Psoas muscle (tissue), 8 donors: ENCODE measurements at regions of chr21 and their contacts with region 1.

Region 1: GRCh38 chr21:36773117-36773516 is 74.2 kb downstream of the SIM2 start:
- DNase-seq: peak; percentile 88 to 95
- ATAC-seq: peak; percentile 99
- H3K4me3 ChIP-seq: no peak overlapping the region
- H3K27ac ChIP-seq: peak overlapping the region; percentile 47
- H3K4me1 ChIP-seq: peaks cover 15% of the 10 kb centered on the region
- H3K27me3 ChIP-seq: no peaks in the 10 kb centered on the region
- CTCF ChIP-seq: no peak

Region 2: DNA sequence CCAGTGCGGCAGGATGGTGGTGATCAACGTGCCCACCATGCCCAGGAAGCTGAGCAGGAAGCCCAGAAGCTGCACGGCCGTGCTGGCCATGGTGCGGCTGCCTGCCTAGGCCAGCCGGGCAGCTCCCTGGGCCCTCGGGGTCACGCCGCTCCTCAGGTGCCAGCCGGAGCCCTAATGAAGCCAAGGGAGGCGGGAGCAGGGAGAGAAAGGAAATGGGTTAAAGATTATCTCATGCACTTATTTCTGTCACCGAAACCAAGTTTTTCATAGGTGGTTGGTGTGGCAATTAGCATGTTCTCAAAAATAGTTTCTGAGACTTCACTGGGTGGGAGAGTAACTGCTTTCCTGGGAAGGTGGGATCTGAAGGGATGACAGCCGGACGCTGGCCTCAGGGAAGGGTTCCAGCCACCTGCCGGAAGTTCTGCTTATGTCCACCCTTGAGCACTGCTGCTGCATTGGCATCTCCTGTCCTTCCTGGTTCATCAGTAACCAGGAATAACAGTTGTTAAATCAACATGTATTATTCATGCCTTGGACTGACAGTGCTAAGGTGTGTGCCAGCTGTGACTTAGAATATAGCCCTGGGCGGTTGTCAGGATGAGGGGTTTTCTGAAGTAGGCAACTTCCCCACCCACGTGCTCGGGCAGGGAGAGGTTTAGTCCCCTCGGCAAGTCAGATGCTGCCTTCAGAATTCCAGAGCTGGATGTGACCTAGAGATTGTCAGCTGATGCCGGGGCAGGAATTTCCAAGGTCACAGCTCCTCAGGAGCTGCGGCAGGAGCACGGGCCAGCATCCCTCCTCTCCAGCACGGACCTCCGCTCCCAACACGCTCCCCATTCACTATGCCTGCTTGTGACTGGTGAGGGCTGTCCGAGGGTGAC is 311.3 kb before region 1 on chr21:
- intact Hi-C with region 1: no loop called
- DNase-seq: no peak
- ATAC-seq: no peak
- H3K4me3 ChIP-seq: no peak overlapping the region
- H3K27ac ChIP-seq: no peak overlapping the region
- H3K4me1 ChIP-seq: peaks cover 14% of the 10 kb centered on the region
- H3K27me3 ChIP-seq: no peaks in the 10 kb centered on the region
- CTCF ChIP-seq: no peak

Region 3: DNA sequence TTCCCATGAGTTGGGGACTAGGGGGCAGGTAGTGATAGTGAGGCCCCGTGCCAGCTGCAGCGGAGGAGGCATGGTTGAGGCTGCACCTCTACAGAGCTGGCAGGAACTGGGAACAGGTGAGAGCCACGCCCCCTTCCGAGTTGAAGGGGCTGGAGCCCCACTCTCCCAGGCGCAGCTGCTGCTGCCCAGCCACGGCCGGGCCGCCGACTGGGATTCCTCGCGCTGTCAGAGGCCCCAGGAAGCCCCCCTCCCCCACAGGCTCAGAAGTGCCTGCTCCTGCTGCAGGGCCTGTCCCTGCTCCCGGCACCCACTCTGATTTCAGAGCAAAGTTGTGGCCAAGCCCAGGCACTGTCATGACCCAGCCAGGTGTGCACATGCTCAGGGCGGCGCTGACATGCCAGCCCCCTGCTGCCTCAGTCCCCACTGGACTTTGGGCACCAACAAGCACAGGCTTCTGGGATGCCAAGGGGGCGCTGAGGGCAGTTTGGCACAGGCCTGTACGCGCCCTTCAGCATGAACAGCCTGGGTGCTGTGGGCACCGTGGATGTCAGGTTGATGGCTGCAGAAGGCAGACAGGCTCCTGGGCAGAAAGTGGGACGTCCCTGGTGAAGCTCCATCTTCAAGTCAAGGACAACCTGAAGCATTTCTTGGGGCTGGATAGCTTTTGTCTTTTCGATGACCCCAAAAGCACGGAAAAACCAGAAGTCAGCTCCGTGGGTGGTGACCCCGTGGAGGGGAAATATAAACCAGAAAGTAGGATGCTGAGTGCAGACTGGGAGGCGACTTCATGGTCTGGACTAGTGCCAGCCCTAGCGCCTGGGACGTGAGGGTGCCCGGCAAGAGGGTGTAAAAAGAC is 47.3 kb after region 1 on chr21:
- intact Hi-C with region 1: no loop called
- DNase-seq: no peak
- ATAC-seq: peak in 1 of 4 donors; percentile 22
- H3K4me3 ChIP-seq: no peak overlapping the region
- H3K27ac ChIP-seq: no peak overlapping the region
- H3K4me1 ChIP-seq: no peaks in the 10 kb centered on the region
- H3K27me3 ChIP-seq: no peaks in the 10 kb centered on the region
- CTCF ChIP-seq: no peak

Region 4: GRCh38 chr21:36835383-36835795 is 62.3 kb after region 1 on chr21:
- intact Hi-C with region 1: loop called in 1 of 2 experiments (anchors 10 kb)
- DNase-seq: peak; percentile 63 to 93
- ATAC-seq: peak; percentile 99 to 100 (median 99)
- H3K4me3 ChIP-seq: peak overlapping the region; percentile 3
- H3K27ac ChIP-seq: peak overlapping the region; percentile 77
- H3K4me1 ChIP-seq: peaks cover 31% of the 10 kb centered on the region
- H3K27me3 ChIP-seq: no peaks in the 10 kb centered on the region
- CTCF ChIP-seq: no peak

Region 5: GRCh38 chr21:36847171-36847570 is 74.1 kb after region 1 on chr21:
- intact Hi-C with region 1: no loop called
- DNase-seq: no peak
- ATAC-seq: peak in 2 of 4 donors; percentile 59 to 62
- H3K4me3 ChIP-seq: no peak overlapping the region
- H3K27ac ChIP-seq: no peak overlapping the region
- H3K4me1 ChIP-seq: peaks cover 7% of the 10 kb centered on the region
- H3K27me3 ChIP-seq: no peaks in the 10 kb centered on the region
- CTCF ChIP-seq: no peak

Region 6: DNA sequence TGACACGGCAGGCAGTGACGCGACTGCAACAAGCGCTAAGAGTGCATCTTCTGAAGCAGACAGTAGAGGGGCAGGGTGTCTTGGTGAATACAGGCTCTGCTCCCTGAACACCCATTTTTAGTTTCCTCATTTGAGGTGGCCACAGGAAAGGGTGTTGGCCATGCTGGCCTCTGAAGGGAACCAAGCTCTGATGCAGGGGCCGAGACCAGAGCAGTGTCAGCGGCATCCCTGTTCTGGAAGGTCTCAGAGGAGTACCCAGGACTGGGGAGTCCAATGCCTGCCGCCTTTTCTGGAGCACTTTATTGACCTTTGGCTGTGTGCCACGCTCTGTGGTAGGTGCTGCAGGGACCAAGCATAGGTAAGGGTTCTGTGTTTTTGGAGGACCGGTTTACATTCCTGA is 1042.8 kb after region 1 on chr21:
- intact Hi-C with region 1: no loop called
- DNase-seq: no peak
- ATAC-seq: no peak
- H3K4me3 ChIP-seq: no peak overlapping the region
- H3K27ac ChIP-seq: no peak overlapping the region
- H3K4me1 ChIP-seq: no peaks in the 10 kb centered on the region
- H3K27me3 ChIP-seq: no peaks in the 10 kb centered on the region
- CTCF ChIP-seq: no peak